HepG2 (cell line): ENCODE measurements at regions of chr2 and their contacts with region 1.

Region 1: GRCh38 chr2:222671259-222672067 is at the start of gene MOGAT1:
- DNase-seq: peak; percentile 71
- ATAC-seq: peak; percentile 95
- H3K4me3 ChIP-seq: peak within 1 kb of the TSS; percentile 64 to 83 (median 79)
- H3K27ac ChIP-seq: peak within 1 kb of the TSS; percentile 75
- H3K4me1 ChIP-seq: peaks cover 58% of the 10 kb centered on the region
- H3K27me3 ChIP-seq: no peaks in the 10 kb centered on the region; a peak in 1 of 5 replicates
- CTCF ChIP-seq: peak; percentile 24; the same call in 1 of the 2 replicates
- EP300 ChIP-seq: peak in 1 of 2 experiments; percentile 5; a peak in 1 of 4 replicates
- POLR2A ChIP-seq: peak; percentile 86 to 87
- RAD21 ChIP-seq: peak; percentile 72; the same call in 1 of the 2 replicates
- total RNA-seq, gene MOGAT1: 1.3 and 4.3 TPM in 2 replicates

Region 2: DNA sequence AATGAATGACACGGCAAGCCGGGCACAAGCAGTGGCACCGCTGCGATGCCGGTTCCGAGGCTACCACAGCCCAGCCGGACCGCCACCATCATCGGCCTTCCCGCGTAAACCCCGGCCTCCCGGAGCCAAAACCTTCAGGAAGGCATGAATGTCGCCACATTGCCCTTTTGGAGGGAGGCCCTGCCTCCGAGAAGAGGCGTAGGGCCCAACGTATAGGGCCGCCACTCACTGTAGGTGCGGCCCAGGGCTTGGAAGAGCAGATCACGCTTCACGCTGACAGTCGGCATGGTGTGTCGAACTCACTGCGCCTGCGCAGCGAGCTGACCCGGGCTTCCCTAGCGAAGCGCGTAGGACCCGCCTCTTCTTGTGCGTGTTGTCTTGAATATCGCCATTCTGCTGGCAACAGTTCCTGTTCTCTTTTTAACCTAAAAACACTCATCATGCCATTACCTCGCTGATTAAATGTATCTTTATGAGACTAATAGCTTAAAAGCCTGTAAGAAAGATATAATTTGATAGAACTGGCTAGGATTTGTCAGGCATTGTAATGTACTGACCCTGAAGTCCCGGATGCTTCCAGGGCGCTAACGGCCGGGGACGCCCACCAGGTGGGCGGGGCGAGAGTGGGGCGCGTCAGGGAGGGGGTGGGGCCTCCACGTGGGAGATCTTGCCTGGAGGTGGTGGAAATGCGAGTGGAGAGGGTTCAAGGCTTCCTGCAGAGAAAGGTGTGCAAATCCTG is 15.5 kb before region 1 on chr2 and contains the start of gene FARSB:
- CTCF ChIA-PET with region 1: no interaction called
- POLR2A ChIA-PET with region 1: interaction called, 14 read pairs
- in situ Hi-C with region 1: no loop called
- intact Hi-C with region 1: loop called (anchors 1 kb)
- DNase-seq: peak; percentile 95
- ATAC-seq: peak; percentile 94
- H3K4me3 ChIP-seq: peak within 1 kb of the TSS; percentile 86 to 95 (median 87)
- H3K27ac ChIP-seq: peak within 1 kb of the TSS; percentile 97
- H3K4me1 ChIP-seq: peaks cover 31% of the 10 kb centered on the region
- H3K27me3 ChIP-seq: peaks cover 0 to 4% of the 10 kb centered on the region in 2 experiments; a peak in 1 of 5 replicates
- CTCF ChIP-seq: 0 out of 2 replicates have a peak, but pooled peaks have one; percentile 10
- EP300 ChIP-seq: peak in 1 of 2 experiments; percentile 32; a peak in 1 of 4 replicates
- POLR2A ChIP-seq: peak; percentile 85 to 92; a peak in 3 of 4 replicates
- RAD21 ChIP-seq: 0 out of 2 replicates have a peak, but pooled peaks have one; percentile 33
- total RNA-seq, gene FARSB: 45.9 and 68.1 TPM in 2 replicates